ENCODE measurements at regions of chr19 and their contacts with region 1.

Region 1: GRCh38 chr19:7815325-7815724 is 14.7 kb upstream of the EVI5L start:
- DNase-seq: no peak
- CTCF ChIP-seq: no peak

Region 2: GRCh38 chr19:7762719-7763293 is 52.5 kb before region 1 on chr19 and contains the start of gene CLEC4M:
- CTCF ChIA-PET with region 1: no interaction called
- POLR2A ChIA-PET with region 1: no interaction called
- DNase-seq: no peak
- CTCF ChIP-seq: no peak

Region 3: DNA sequence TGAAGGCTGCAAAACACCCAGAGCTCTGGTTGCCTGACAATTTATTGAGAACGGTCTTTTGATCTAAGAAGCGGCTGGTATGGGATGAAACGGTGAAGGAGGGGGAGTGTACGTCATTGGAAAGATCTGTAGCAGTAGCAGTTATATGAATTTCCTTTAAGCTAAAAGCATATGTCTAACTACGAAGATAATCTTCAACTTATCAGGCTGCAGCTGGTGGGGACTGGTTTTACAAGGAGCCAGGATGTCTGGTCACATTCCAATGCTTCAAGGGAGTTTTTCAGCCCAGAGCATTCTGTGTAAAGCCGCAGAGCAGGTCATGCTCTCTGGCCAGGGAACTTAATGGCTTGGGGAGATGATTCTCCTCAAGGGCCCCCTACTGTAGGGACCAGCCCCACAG is 23.1 kb before region 1 on chr19:
- CTCF ChIA-PET with region 1: no interaction called
- POLR2A ChIA-PET with region 1: no interaction called
- DNase-seq: no peak
- CTCF ChIP-seq: no peak

Region 4: DNA sequence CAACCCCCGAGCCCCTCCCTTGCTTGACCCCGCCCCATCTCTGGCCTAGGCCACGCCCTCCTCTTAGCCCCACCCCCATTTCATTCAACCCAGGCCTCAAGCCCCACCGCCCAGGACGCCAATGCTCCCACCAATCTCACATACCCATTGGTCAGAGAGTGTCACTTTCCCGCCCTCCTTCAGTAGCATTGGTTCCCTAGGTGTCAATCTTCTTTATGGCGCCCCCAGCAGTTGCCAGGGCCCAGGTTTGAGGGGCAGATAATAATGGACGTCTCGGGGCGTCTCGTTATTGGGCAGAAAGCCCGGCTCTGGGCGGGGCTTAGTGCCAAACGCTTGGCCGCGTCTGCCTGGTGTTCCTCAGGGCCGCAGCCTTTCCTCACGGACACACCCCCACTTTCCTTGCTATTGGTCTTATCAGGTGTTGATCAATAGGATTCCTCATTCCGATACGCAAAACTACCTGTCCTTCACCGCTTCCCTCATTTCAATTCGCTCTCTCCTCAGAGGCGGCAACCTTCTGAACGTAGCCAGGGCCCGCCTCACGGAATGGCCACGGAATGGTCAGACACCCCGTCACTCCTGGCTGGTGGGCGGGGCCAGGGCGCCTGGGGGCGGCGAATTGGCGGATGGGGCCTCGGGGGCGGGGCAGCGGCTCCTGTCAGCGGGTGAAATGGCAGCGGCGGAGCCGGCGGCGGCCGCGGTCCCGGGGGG is 14.4 kb after region 1 on chr19 and contains the start of gene EVI5L:
- CTCF ChIA-PET with region 1: interaction called, 12 read pairs
- POLR2A ChIA-PET with region 1: no interaction called
- DNase-seq: peak; percentile 99
- CTCF ChIP-seq: peak; percentile 5

Region 5: DNA sequence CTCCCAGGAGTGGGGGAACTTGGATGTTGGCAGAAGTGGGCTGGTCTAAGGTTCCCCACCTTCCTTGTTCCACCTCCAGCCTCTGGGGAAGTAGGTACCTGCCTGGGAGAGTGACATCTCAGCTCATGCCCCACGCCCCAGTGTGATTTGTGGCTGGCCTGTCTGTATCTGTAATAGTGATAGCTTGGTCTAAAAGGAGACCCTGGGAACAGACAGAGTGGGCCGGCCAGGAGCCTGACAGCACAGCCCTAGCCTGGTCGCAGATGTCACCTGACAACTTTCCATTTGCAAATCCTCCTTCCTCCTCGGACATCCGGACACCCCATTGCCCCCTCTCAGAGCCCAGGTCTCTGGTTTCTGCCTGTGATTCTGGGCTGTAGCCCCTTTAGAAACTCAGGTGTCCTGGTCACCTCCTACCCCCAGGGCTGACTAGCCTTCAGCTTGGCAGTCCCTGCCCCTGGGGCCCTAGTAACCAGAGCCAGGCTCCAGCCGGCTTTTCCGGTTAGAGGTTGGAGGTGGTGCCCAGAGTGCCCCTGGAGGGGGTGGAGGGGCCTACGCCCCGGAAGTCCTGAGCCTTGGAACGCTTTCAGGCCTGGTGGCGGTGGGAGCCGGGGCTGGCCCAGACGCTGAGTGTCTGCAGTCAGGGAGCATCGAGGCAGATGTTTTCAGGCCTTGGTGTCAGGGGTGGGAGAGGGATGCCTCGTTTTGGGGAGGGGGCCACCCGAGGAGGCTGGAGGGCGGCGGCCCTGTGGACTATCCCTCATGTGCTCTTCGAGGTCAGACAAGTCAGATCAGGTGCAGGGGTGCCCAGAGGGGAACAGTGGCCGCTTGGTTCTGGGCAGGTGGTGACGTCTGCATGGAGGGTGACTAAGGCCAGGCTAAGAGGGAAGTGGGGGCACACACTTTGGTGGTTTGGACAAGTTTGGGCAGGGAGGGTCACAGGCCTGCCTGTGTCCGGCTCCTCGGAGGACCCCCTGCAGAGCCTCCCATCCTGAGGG is 79.5 kb after region 1 on chr19:
- CTCF ChIA-PET with region 1: no interaction called
- POLR2A ChIA-PET with region 1: no interaction called
- DNase-seq: no peak
- CTCF ChIP-seq: no peak

Region 6: GRCh38 chr19:7919610-7920518 is 104.5 kb after region 1 on chr19 and contains the start of gene SNAPC2:
- CTCF ChIA-PET with region 1: no interaction called
- POLR2A ChIA-PET with region 1: no interaction called
- DNase-seq: peak; percentile 92
- CTCF ChIP-seq: no peak